ENCODE measurements at regions of chr14 and their contacts with region 1.

Region 1: GRCh38 chr14:101791919-101792572 is 30.5 kb downstream of the PPP2R5C start:
- DNase-seq: peak; percentile 68
- ATAC-seq: peak; percentile 70
- H3K4me3 ChIP-seq: peak overlapping the region; percentile 57
- H3K27ac ChIP-seq: peak overlapping the region; percentile 27
- H3K4me1 ChIP-seq: peaks cover 11% of the 10 kb centered on the region
- H3K27me3 ChIP-seq: no peaks in the 10 kb centered on the region
- CTCF ChIP-seq: no peak

Region 2: DNA sequence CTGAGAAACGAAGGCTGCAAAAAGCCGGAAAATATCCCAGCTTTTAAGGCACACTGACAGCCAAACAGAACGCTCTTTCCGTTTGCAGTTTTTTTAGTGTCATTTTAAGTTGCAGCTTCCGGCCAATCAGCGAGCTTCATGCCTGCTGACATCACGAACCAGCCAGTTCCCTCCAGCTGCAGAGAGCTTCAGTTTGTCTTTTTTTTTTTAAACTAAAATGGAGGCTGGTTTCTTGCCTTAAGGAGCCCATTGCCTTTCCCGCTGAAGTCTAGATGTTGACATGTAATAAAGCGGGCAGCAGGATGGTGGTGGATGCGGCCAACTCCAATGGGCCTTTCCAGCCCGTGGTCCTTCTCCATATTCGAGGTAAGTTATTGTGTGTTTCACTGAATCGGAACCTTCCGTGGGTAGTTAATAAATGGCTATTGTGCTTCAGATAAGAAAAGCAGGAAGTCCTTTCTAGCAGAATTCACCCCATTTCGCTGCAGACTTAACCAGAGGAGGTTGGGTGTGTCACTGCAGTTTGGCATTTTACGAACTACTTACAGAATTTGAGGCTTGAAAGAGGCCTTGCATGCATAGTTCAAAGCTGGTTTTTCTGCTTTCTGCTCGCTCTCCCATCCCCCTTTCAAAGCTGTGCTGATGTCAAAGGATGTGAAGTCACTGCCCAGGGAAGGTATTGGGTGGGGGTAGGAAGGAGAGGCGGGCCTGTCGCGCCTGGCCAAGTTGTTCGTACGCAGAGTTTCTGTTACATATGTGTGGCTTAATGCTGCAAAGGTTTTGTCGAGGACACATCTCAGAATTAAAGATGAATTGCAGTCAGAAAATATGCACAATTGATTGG is 17.8 kb after region 1 on chr14:
- CTCF ChIA-PET with region 1: no interaction called
- POLR2A ChIA-PET with region 1: no interaction called
- intact Hi-C with region 1: loop called (anchors 2 kb)
- DNase-seq: peak; percentile 93
- ATAC-seq: peak; percentile 92
- H3K4me3 ChIP-seq: peak overlapping the region; percentile 72
- H3K27ac ChIP-seq: peak overlapping the region; percentile 98
- H3K4me1 ChIP-seq: peaks cover 50% of the 10 kb centered on the region
- H3K27me3 ChIP-seq: no peaks in the 10 kb centered on the region
- CTCF ChIP-seq: no peak

Region 3: GRCh38 chr14:101937926-101938767 is 146.1 kb after region 1 on chr14:
- CTCF ChIA-PET with region 1: no interaction called
- POLR2A ChIA-PET with region 1: interaction called, 15 read pairs
- intact Hi-C with region 1: no loop called
- DNase-seq: no peak
- ATAC-seq: no peak
- H3K4me3 ChIP-seq: no peak overlapping the region
- H3K27ac ChIP-seq: no peak overlapping the region
- H3K4me1 ChIP-seq: no peaks in the 10 kb centered on the region
- H3K27me3 ChIP-seq: no peaks in the 10 kb centered on the region
- CTCF ChIP-seq: no peak